ENCODE measurements at regions of chr2 and their contacts with region 1.

Region 1: DNA sequence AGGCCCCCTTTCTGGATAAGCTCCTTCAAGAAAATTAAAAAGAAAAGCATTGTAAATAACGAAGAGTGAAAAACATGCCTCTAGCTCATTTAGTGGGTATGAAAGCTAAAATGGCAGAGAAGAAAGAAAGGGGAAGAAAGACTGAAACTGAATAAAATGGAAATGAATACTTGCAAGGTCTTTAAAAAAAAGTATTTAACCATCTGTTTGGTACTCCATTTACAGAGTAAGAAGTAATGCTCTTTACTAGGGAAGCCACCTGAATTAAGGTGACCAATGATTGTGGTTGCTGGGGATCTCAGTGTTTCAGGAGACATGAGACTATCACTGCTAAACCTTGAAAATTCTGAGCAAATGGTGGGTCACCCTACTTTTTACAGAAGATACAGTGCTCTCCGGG is 17.7 kb upstream of the ARL5A start:
- DNase-seq: no peak
- H3K4me3 Mint-ChIP-seq: no peak overlapping the region
- H3K27ac Mint-ChIP-seq: no peak overlapping the region
- H3K4me1 Mint-ChIP-seq: no peaks in the 10 kb centered on the region
- H3K27me3 Mint-ChIP-seq: peaks cover 22% of the 10 kb centered on the region

Region 2: DNA sequence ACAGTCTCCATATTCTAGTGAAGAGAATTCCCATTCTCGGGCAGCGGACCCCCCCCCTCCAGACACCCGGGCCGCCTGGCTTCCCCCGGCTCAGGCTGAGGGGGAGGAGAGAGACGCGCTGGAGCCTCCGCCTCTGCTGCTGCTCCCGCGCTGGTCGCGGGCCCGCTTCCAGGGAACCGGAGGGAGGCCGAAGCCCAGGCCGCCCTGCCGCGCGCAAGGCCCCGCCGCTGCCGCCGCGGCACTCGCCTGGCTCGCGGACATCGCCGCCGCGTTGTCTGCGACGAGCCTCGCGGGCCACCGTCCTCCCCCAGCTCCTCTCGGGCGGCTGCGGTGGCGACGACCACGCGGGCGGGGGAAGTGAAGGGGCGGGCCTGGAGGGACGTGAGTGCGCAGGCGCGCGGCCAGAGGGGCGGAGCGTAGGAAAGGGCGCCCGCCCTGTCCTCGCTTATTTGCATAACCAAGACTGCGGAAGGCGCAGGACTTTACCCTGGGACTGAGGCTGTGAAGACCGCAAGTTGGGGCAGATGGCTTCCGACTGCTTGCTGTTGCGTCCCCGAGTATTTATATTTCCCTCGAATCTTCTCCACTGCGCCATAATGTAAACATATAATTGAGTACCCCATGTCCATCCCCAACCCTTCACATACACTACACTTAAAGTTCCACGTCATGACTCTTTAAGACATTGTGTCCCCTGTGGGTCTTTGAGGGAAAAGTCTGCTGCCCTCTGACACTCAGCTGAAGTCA is 17.6 kb before region 1 on chr2 and contains the start of gene ARL5A:
- intact Hi-C with region 1: no loop called
- DNase-seq: peak; percentile 94
- H3K4me3 Mint-ChIP-seq: peak within 1 kb of the TSS; percentile 94
- H3K27ac Mint-ChIP-seq: peak within 1 kb of the TSS; percentile 82
- H3K4me1 Mint-ChIP-seq: peaks cover 28% of the 10 kb centered on the region
- H3K27me3 Mint-ChIP-seq: peaks cover 2% of the 10 kb centered on the region
- total RNA-seq, gene ARL5A: 64.9 and 71.7 TPM in 2 replicates

Region 3: DNA sequence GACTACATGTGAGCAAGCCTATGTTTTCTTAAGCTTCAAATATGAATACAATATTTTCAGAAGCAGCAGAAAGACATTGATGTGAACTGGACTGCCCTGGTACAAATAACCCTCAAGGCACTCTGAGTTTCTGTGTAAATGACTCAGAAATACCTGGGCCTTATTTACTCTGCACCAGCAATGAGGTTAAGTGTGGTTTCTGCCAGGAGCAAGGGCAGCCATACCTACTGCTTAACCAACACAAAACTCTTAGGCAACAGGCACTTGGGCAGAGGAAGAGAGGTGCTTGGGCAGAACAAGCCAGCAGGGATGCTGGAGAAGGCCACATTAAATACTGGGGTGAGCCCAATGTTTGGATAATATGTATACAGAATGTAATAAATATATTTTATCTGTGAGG is 11.8 kb after region 1 on chr2:
- intact Hi-C with region 1: no loop called
- DNase-seq: no peak
- H3K4me3 Mint-ChIP-seq: no peak overlapping the region
- H3K27ac Mint-ChIP-seq: no peak overlapping the region
- H3K4me1 Mint-ChIP-seq: peaks cover 3% of the 10 kb centered on the region
- H3K27me3 Mint-ChIP-seq: no peaks in the 10 kb centered on the region

Region 4: DNA sequence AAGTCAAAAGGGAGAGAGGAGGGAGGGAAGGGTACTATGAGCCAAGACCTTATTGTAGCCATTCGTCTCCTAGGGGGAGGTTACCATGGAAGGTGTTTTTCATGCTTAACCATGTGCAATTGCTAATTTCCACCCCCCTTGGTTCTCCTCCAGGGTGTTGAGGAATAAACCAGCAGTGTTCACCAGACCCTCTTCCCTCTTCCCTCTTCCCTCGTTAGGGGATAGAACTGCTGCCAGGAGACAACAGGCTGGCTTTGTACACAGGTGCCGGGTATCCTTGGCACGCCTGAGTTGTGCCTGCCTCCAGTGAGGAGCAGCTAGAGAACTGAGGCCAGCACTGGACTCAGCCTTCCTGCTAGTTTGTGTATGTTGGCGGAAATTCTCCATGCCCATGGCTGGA is 23.4 kb after region 1 on chr2:
- intact Hi-C with region 1: loop called (anchors 2 kb)
- DNase-seq: no peak
- H3K4me3 Mint-ChIP-seq: no peak overlapping the region
- H3K27ac Mint-ChIP-seq: no peak overlapping the region
- H3K4me1 Mint-ChIP-seq: no peaks in the 10 kb centered on the region
- H3K27me3 Mint-ChIP-seq: peaks cover 11% of the 10 kb centered on the region

Region 5: DNA sequence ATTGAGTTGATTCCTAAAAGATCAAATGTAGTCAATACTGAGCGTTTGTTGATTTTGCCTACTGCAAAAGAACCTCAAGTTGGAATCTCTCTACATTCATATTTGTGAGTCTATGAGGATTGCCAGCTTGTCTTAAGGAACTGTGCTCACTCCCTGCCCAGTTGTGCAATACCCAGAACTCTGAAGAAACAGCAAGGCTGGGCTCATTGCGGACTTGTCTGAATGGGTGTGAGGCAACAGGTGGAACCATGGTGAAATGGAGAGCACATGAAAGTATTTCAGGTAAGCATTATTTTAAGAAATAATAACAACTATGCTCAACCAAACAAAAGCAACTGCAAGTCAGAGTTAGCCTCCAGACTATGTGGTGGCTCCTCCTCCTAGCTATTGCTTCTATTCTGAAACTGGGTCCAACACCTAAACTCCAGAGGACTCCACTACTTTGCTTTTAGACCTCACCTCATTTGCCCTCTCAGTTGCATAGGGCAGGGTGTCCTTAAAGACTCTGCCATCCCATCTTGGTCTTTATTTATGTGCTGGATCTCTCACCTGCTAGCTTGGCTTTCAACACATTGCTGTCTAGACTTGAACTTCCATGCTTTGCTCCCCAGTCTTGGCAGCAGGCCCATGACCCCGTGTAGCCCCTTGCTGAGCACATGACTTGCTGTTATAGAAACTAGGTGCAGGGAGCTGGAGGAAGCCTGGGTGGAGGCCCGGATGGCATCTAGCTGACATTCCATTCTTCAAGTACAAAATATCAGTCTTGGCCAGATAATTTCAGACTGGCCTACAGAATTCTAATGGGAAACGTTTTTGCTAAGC is 77.2 kb after region 1 on chr2:
- intact Hi-C with region 1: no loop called
- DNase-seq: no peak
- H3K4me3 Mint-ChIP-seq: no peak overlapping the region
- H3K27ac Mint-ChIP-seq: no peak overlapping the region
- H3K4me1 Mint-ChIP-seq: no peaks in the 10 kb centered on the region
- H3K27me3 Mint-ChIP-seq: peaks cover 6% of the 10 kb centered on the region

Region 6: DNA sequence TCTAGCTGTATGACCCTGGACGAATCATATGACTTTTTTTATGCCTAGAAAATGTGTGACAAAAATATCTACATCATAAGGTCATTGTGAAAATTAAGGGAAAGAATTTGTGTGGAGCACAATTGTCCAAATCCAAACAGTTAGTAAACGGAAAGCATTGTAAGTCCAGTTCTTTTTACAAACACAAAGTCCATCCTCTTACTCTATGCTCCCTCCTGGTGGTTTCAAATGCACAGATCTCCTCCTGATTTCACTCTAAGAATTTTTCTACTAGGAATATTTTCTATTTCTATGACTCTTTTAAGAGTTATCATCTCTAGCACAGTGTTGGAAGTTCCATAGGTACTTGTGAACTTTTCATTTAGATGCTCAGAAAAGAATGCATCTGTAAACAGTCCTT is 107.6 kb after region 1 on chr2:
- intact Hi-C with region 1: no loop called
- DNase-seq: no peak
- H3K4me3 Mint-ChIP-seq: no peak overlapping the region
- H3K27ac Mint-ChIP-seq: no peak overlapping the region
- H3K4me1 Mint-ChIP-seq: no peaks in the 10 kb centered on the region
- H3K27me3 Mint-ChIP-seq: peaks cover 2% of the 10 kb centered on the region